OCI-LY7 (cell line): ENCODE measurements at regions of chr7 and their contacts with region 1.

Region 1: DNA sequence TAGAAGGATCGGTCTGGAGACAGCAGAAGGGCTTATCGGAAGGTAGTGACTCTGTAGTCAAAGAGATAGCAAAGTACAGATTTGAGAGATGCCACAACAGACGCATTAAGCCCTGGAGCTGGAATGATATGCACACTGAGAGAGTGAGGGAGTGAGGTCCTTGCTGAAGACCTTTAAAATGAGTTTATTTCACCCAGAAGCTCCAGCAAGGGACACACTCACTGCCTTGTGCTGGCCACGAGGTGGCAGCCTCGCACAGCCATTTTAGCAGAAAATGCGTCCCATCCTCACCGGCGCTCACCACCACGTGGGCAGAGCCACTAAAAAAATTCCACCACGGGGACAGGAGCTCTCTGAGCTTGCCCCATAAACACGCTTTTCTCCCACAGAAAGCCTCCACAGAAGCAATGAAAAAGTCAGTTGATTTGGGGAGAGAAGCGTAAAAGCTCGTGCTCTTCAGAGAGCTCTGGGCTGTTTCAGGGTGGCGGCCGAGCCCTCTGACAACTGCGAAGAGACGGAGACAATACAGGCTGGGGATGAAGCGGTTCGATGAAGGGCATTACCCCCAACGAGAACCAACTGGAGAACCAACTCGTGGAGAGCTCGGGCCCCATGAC is 163.0 kb upstream of the KLF14 start:
- DNase-seq: peak; percentile 72
- H3K4me3 ChIP-seq: no peak overlapping the region
- H3K27ac ChIP-seq: no peak overlapping the region
- H3K4me1 ChIP-seq: peaks cover 41% of the 10 kb centered on the region
- CTCF ChIP-seq: peak; percentile 77

Region 2: DNA sequence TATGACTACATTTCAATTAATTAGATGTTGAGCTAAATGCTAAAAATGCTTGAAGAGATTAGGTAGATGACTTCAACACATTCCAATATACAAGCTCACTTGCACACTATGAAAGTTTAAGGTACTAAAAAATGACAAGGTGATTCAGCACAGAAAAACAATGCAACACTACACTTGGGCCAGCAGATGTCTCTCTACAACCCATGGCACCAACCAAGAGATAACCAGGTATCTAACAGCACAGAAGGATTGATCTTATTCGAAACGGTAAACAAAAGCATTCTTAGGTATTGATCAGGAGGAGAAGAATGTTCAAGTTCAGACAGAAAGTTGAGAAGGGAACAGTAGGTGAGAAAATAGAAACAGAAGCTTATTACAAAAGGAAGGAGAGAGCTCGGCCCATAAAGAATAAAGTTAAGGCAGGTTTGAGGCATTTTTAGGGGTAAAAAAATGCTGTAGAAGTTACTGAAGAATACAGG is 85.2 kb after region 1 on chr7:
- CTCF ChIA-PET with region 1: interaction called, 10 read pairs
- POLR2A ChIA-PET with region 1: no interaction called
- intact Hi-C with region 1: loop called (anchors 5 kb)
- DNase-seq: peak; percentile 40
- H3K4me3 ChIP-seq: no peak overlapping the region
- H3K27ac ChIP-seq: peak overlapping the region; percentile 16
- H3K4me1 ChIP-seq: peaks cover 3% of the 10 kb centered on the region
- CTCF ChIP-seq: peak; percentile 83

Region 3: DNA sequence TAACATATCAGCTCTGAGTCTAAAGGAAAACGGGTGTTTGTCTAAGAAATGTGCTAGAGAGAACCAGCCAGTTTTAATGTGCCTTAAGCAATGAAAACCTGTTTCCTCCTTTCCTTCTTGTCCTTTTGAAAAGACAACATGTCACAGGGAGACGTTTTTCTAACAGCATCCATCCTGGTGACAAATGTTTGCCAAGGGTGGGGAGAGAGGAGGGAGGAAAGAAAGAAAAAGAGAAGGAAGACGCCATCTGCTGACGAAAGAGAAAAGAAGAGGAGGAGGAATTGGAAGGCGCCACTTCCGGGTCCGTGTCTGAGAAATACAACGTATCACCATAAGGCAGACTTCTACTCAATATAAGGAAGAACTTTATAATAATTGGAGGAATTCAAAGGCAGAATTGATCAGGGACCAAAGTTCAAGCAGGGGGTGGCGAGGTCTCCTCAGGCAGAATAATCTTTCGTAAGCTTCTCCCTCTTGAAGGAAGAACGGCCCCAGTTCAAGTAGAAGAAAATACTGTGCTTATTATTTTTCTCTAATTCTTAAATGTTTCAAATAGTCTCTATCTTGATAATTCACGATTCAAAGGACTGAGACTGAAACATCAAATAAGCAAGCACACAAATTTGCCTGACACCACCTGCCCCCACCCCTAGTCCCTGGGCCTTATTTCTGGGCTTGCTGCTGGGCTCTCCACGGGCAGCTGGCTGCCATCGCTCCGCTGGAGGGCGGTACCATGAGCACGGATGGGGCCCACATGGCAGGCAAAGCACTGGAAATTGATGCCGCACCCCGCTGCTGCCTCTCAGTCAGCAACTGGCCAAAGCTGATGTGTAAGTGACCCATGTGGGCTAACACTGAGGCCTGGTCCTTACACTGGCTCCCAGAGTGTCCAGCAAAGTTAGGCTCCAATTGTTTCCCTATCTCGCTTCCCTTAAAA is 110.7 kb after region 1 on chr7:
- CTCF ChIA-PET with region 1: no interaction called
- POLR2A ChIA-PET with region 1: interaction called, 3 read pairs
- intact Hi-C with region 1: loop called (anchors 1 kb)
- DNase-seq: peak; percentile 48
- H3K4me3 ChIP-seq: no peak overlapping the region
- H3K27ac ChIP-seq: peak overlapping the region; percentile 9
- H3K4me1 ChIP-seq: peaks cover 31% of the 10 kb centered on the region
- CTCF ChIP-seq: peak; percentile 76

Region 4: DNA sequence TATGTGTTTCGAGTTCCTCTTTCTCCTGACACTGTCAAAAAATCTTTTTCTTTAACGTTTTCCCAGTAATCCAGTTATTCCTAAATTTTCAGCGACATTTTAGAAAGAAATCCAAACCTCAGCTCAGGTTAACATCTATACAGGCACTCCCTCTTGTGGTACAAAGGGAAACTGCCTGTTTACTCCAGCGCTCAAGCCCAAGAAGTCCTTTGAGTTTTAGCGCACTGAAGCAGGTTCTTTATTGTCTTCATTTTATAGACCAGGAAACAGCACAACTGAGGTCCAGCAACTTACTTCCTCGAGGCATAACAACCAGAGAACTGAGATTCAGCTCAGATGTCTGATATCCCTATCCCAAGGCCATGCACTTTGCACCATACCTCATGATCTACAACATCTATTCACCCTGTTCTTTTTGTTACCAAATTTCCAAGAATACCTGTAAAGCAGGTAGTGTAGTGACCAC is 143.5 kb after region 1 on chr7:
- CTCF ChIA-PET with region 1: interaction called, 8 read pairs
- POLR2A ChIA-PET with region 1: no interaction called
- intact Hi-C with region 1: loop called (anchors 1 kb)
- DNase-seq: peak; percentile 53
- H3K4me3 ChIP-seq: no peak overlapping the region
- H3K27ac ChIP-seq: no peak overlapping the region
- H3K4me1 ChIP-seq: peaks cover 3% of the 10 kb centered on the region
- CTCF ChIP-seq: peak; percentile 87

Region 5: GRCh38 chr7:131302876-131303707 is 406.1 kb after region 1 on chr7:
- CTCF ChIA-PET with region 1: no interaction called
- POLR2A ChIA-PET with region 1: no interaction called
- intact Hi-C with region 1: loop called (anchors 5 kb)
- DNase-seq: peak; percentile 37
- H3K4me3 ChIP-seq: no peak overlapping the region
- H3K27ac ChIP-seq: no peak overlapping the region
- H3K4me1 ChIP-seq: peaks cover 6% of the 10 kb centered on the region
- CTCF ChIP-seq: peak; percentile 74

Region 6: DNA sequence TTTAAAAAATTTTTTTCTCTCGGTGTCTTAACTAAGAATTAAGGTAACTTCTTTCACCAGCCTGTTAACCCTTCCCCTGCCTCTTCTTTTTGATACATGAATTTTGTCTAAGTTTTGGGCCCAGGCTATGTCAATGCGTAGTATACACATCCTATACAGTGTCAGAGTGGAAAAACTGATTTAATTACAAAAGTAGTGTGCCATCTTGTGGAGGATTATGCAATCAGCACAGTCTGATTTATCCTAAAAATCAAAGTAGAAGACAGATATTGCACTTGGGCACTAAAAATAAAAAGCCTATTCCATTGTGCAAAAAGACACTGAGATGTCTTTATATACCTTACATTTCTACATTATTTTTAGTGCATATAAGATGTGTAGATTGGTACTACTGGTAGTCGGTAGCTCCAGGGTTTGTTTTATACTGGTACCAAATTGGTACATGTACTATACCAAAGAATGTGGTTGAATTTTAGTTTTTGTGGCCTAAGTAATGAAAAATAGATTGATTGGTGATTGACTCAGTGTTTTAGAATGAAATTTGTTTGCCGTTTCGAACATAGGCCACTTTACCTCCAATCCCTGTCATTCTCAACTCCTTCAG is 527.3 kb after region 1 on chr7:
- CTCF ChIA-PET with region 1: no interaction called
- POLR2A ChIA-PET with region 1: no interaction called
- intact Hi-C with region 1: loop called (anchors 5 kb)
- DNase-seq: peak; percentile 64
- H3K4me3 ChIP-seq: no peak overlapping the region
- H3K27ac ChIP-seq: no peak overlapping the region
- H3K4me1 ChIP-seq: peaks cover 7% of the 10 kb centered on the region
- CTCF ChIP-seq: peak; percentile 79